ENCODE measurements at regions of chrX and their contacts with region 1.

Region 1: GRCh38 chrX:150449313-150449712 is 86.2 kb downstream of the MAMLD1 start:
- DNase-seq: no peak
- H3K4me3 ChIP-seq: no peak overlapping the region
- H3K27ac ChIP-seq: no peak overlapping the region
- H3K4me1 ChIP-seq: no peaks in the 10 kb centered on the region
- H3K27me3 ChIP-seq: no peaks in the 10 kb centered on the region
- CTCF ChIP-seq: peak in 1 of 3 experiments; percentile 50; a peak in 1 of 4 replicates
- EP300 ChIP-seq: no peak
- POLR2A ChIP-seq: no peak
- RAD21 ChIP-seq: peak; percentile 35 to 58

Region 2: DNA sequence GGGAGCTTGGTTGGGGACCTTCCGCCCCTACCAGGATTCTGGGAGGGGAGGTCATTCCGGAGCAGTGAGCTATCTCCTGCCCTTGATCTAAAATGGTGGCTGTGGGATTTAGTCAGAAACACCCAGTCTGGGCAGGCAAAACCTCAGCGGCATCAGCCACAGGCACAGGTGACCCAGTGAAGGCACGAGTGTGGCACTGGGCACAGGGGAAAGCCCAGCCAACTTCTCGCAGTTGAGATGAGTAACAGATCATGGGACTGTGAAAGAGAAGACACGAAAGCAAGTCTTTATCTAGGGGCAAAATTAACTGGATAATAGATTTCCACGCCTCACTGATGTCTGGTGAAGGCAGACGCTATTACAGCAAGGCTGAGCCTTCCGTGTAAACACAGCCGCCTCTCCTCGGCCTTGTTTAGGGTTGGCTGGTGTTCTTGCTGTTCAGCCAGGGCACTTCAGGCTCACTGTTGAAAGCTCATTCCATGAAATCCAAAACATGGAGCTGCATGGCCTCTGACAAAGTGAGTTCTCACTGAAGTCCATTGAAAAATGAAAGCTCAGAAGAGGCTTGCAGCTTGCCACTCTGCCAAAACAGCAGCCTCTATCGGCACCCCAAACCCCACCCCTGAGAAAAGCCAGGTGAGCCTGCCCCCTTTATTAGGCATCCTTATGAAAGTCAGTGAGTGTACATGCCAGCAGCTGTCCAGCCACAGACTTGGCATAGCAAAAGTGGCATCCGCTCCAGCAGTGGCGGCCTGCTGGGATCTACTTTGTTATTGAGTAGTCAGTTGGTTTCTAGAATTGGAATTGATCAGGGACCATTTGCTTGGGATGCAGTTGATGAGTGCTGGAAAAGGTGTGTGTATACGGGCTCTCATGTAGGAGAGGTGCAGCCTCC is 16.8 kb after region 1 on chrX:
- CTCF ChIA-PET with region 1: interaction called, 15 read pairs
- POLR2A ChIA-PET with region 1: no interaction called
- DNase-seq: no peak
- H3K4me3 ChIP-seq: no peak overlapping the region
- H3K27ac ChIP-seq: no peak overlapping the region
- H3K4me1 ChIP-seq: no peaks in the 10 kb centered on the region
- H3K27me3 ChIP-seq: no peaks in the 10 kb centered on the region
- CTCF ChIP-seq: no peak
- EP300 ChIP-seq: no peak
- POLR2A ChIP-seq: no peak
- RAD21 ChIP-seq: no peak

Region 3: DNA sequence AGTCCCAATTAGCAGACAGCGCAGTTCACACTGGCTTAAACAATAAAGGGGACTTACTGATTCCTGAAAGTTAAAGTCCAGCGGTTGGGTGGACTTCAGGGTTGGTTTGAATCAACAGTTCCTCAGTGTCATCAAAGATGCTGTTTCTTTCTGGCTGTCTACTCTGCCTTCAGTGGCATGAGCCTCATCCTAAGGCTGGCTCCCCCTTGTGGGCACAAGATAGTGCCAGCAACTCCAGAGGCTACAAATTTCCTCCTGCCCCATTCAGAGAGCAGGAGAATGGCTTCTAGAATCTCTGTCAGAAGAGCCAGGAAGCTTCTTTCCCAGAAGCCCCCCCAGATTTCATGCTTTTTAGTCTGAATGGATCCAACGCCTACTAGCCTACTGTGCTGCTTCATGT is 36.7 kb after region 1 on chrX:
- CTCF ChIA-PET with region 1: interaction called, 15 read pairs
- POLR2A ChIA-PET with region 1: no interaction called
- DNase-seq: peak in 1 of 2 experiments; percentile 53
- H3K4me3 ChIP-seq: no peak overlapping the region
- H3K27ac ChIP-seq: no peak overlapping the region
- H3K4me1 ChIP-seq: no peaks in the 10 kb centered on the region
- H3K27me3 ChIP-seq: no peaks in the 10 kb centered on the region
- CTCF ChIP-seq: peak; percentile 63 to 73 (median 69)
- EP300 ChIP-seq: no peak
- POLR2A ChIP-seq: no peak
- RAD21 ChIP-seq: peak; percentile 60 to 69

Region 4: DNA sequence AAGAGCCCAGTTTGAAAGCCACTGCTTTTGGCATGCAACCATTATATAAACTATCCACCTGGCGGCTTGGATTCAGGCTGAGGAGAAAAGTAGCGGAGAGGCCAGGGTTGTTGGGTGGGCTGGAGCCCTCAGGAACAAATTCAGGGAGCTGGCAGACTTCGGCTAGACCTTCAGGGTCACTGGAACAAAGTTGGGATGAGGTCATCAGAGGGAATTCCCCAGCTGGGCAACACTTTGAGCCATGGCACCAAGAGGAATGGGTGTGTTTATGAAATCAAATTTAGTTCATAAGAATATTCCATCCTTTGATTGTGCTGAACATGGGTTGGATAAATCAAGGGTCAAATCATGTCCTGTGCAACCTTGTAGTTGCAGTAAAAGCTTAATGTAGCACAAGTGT is 265.9 kb after region 1 on chrX:
- CTCF ChIA-PET with region 1: no interaction called
- POLR2A ChIA-PET with region 1: no interaction called
- DNase-seq: no peak
- H3K4me3 ChIP-seq: no peak overlapping the region
- H3K27ac ChIP-seq: no peak overlapping the region
- H3K4me1 ChIP-seq: no peaks in the 10 kb centered on the region
- H3K27me3 ChIP-seq: no peaks in the 10 kb centered on the region
- CTCF ChIP-seq: no peak
- EP300 ChIP-seq: no peak
- POLR2A ChIP-seq: no peak
- RAD21 ChIP-seq: no peak

Measured in H1 (cell line).